Right ventricle myocardium superior (tissue), 1 donor: ENCODE measurements at regions of chr1 and their contacts with region 1.

Region 1: DNA sequence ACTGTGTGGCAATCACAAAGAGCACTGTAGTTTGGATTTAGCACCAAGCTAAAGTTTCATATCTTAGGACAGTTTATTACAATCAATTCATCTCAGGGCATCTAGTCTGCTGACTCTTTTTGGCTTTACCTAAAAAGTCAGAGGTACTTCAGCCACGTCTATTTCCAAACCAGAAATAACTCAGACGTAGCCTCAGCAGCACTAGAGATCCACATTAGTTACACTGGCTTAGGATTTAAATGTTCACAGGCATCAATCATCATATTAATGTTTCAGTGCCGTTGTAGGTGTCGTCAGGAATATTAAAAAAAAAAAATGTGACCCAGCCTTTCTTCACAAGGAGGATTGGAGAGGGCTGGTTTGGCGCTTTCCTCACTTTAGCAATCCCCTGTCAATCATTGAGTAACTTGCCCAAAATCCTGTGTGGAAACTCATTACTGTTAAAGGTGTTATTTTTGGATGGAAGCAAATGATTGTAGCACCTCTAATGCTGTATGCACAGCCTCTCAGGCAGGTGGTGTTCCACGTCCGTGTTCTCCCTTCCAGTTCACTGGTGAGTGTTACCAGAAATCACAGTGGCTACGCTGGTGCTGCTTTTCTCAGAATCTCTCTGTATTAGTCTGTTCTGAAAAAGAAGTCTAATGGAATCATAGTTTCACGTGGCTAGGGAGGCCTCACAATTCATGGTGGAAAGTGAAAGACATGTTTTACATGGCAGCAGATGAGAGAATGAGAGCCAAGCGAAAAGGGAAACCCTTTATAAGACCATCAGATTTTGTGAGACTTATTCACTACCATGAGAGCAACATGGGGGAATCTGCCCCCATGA is 45.4 kb downstream of the NEK7 start:
- DNase-seq: no peak
- ATAC-seq: peak; percentile 40

Region 2: DNA sequence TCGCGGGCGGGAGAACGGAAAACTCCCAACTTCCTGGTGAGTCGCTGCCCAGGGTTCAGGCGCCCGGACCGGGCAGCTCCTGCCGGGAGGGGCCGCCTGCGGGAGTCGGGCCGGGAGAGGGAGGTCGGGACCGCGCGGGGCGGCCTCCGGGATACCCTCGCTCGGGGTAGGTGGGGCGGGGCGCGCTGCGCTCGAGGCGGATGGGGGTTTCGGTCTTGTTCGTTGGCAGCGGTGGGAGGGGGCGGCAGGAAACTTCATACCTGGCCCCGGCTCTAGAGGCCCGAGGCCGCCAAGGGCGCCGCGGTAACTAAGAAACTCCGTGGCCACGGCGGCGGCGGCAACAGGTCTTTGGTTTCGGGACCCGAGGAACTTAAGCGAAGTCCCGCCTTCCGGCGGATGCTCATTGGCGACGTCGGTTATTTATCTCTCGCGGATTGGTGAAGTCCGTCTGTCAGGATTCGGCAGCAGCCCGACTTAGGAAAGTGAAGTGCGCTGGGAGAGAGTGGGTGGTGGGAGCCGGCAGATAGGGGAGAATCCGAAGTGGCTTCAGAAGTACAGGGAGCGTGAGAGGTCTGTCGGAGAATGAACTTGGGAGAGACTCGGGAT is 44.8 kb before region 1 on chr1:
- intact Hi-C with region 1: loop called (anchors 10 kb)
- DNase-seq: peak; percentile 94
- ATAC-seq: peak; percentile 77

Region 3: GRCh38 chr1:198275597-198275996 is 73.4 kb after region 1 on chr1:
- intact Hi-C with region 1: loop called (anchors 10 kb)
- DNase-seq: no peak
- ATAC-seq: no peak

Region 4: DNA sequence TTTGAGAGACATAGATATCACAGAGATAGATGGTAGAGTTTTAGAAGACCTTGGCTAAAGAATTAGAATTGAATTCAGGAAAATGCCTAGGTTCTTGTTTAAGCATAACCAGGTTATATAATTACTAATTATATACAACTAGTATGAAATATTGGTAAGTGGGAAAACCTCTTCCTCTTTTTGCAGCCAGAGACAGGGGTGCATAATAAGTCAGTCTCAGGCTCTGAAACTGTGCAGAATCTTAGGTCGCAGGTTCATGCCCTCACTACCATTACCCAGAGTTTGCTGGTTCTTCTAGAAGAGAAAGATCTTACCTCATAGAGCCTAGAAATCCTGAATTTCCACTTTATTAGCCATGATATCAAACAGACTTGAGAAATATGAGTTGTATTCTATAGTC is 138.0 kb after region 1 on chr1:
- intact Hi-C with region 1: no loop called
- DNase-seq: no peak
- ATAC-seq: no peak